CD4-positive, alpha-beta memory T cell (primary cell): ENCODE measurements at regions of chr9 and their contacts with region 1.

Region 1: DNA sequence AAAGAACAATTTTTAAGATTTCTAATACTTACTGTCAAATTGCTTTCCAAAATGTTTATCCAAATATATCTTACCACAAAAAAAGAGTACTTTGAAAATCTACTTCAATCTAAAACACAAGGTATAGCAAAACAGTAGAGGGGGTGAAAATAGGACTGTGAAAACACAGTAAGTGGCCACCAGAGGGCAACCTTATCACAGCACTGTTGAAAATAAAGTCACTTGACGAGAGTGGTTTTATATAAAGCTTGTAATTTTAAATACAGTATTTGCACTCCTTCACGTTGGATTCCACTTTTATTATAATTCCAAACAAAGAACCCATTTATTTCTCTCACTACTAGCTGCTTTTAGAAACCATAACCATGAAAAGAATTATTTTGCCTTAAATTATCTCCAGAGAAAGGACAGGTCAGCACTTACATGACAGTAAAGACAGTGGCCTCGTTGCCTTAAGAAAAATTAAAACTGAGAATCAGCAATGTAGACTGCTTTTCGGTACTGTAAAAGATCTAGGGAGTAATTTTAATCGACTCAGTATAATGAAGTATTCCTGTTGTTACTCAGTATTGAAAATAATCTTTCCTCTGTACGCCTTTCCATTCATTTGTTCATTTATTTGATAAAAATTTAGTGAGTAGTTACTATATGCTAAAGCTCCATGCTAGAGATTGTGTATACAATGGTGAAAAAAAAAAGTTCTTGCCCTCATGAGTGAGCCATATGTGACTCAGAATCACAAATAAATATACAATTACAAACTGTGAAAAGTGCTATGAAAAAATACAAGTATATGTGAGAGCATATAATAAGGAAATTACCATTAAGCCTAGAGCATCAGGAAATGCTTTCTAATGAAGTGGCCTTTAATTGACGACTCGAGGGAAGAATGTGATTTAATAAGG is 40.0 kb upstream of the CDK5RAP2 start:
- DNase-seq: peak; percentile 46 to 55 (median 50)
- H3K4me3 ChIP-seq: no peak overlapping the region
- H3K4me3 Mint-ChIP-seq: no peak overlapping the region
- H3K27ac ChIP-seq: no peak overlapping the region
- H3K27ac Mint-ChIP-seq: peak overlapping the region in 3 of 7 donors; percentile 4 to 72 (median 9)
- H3K4me1 ChIP-seq: no peaks in the 10 kb centered on the region
- H3K4me1 Mint-ChIP-seq: peaks cover 4 to 7% (median 6%) of the 10 kb centered on the region in 4 donors
- H3K27me3 ChIP-seq: no peaks in the 10 kb centered on the region
- H3K27me3 Mint-ChIP-seq: no peaks in the 10 kb centered on the region

Region 2: GRCh38 chr9:118652912-118653311 is 1967.1 kb before region 1 on chr9:
- CTCF ChIA-PET with region 1: no interaction called
- POLR2A ChIA-PET with region 1: no interaction called
- intact Hi-C with region 1: no loop called
- DNase-seq: no peak
- H3K4me3 ChIP-seq: no peak overlapping the region
- H3K4me3 Mint-ChIP-seq: no peak overlapping the region
- H3K27ac ChIP-seq: no peak overlapping the region
- H3K27ac Mint-ChIP-seq: no peak overlapping the region
- H3K4me1 ChIP-seq: no peaks in the 10 kb centered on the region
- H3K4me1 Mint-ChIP-seq: no peaks in the 10 kb centered on the region
- H3K27me3 ChIP-seq: no peaks in the 10 kb centered on the region
- H3K27me3 Mint-ChIP-seq: no peaks in the 10 kb centered on the region

Region 3: DNA sequence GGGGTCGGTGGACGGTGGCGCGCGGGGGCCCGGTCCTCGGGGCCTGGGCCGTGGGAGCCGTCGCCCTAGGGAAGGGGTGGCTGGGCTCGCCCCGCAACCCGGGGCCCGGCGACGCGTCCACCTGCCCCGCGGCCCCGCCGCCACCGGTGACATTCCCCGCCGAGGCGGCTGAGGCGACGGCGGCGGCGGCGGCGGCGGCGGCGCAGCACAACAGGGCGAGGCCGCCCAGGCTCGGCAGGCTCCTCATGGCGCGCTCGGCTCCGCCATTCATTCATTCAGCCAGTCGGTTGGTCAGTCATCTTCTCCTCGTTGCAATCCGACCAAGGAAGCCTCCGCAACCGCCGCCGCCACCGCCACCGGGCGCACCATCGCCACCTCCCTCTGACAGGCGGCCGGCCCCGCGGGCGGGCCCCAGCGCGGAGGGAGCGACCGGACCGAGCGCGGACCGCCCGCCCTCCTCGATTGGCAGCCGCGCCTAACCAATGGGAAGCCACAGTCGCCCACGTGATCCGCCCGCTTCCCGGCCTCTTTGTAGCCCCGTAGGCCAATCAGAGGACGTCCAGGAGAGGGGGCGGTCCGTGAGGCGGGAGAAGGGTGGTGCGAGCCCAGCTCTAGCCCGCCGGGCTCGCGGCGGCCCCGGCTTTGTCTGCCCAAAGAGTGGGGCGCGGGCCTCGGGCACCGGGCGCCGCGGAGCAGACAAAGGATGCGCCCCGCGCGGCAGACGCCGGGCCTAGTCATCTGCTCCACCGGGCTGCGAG is 94.3 kb after region 1 on chr9 and contains the start of gene MEGF9:
- CTCF ChIA-PET with region 1: interaction called, 4 read pairs
- POLR2A ChIA-PET with region 1: no interaction called
- intact Hi-C with region 1: loop called (anchors 2 kb)
- DNase-seq: peak; percentile 94 to 98 (median 95)
- H3K4me3 ChIP-seq: peak within 1 kb of the TSS; percentile 66 to 84
- H3K4me3 Mint-ChIP-seq: peak within 1 kb of the TSS; percentile 84 to 96 (median 90)
- H3K27ac ChIP-seq: peak within 1 kb of the TSS; percentile 72
- H3K27ac Mint-ChIP-seq: peak within 1 kb of the TSS; percentile 82 to 93 (median 90)
- H3K4me1 ChIP-seq: peaks cover 51% of the 10 kb centered on the region
- H3K4me1 Mint-ChIP-seq: peaks cover 25 to 41% (median 34%) of the 10 kb centered on the region in 4 donors
- H3K27me3 ChIP-seq: no peaks in the 10 kb centered on the region
- H3K27me3 Mint-ChIP-seq: no peaks in the 10 kb centered on the region
- total RNA-seq, gene MEGF9: 14.2 to 14.9 TPM

Region 4: DNA sequence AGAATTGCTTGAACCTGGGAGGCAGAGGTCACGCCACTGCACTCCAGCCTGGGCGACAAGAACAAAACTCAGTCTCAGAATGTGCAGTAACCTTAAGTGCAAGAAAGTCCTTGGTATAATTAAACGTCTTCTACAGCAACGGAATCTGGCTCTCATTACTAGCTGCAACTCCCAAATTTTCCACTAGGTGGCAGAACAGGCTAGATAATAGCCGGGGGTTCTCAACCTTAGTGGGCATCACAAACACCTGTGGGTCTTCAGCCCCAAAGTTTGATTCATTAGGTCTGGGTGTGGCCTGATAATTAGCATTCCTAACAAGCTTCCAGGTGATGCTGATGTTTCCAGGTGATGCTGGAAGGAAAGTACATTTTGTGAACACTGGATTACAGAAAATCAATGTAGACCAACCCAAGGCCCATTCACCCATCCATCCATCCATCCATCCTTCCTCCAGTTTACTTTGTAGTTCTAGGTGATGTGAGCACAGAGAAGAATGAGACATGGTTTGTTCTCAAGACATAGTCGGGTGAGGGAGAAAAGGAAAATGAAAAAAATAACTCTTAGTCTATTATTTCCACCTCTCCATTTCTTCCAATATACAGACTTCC is 135.9 kb after region 1 on chr9:
- CTCF ChIA-PET with region 1: interaction called, 4 read pairs
- POLR2A ChIA-PET with region 1: no interaction called
- intact Hi-C with region 1: loop called (anchors 5 kb)
- DNase-seq: peak; percentile 58 to 75 (median 63)
- H3K4me3 ChIP-seq: no peak overlapping the region
- H3K4me3 Mint-ChIP-seq: no peak overlapping the region
- H3K27ac ChIP-seq: no peak overlapping the region
- H3K27ac Mint-ChIP-seq: peak overlapping the region in 6 of 7 donors; percentile 13 to 79 (median 49)
- H3K4me1 ChIP-seq: no peaks in the 10 kb centered on the region
- H3K4me1 Mint-ChIP-seq: peaks cover 0 to 6% (median 5%) of the 10 kb centered on the region in 4 donors
- H3K27me3 ChIP-seq: no peaks in the 10 kb centered on the region
- H3K27me3 Mint-ChIP-seq: no peaks in the 10 kb centered on the region